Panc1 (cell line): ENCODE measurements at regions of chr17 and their contacts with region 1.

Region 1: DNA sequence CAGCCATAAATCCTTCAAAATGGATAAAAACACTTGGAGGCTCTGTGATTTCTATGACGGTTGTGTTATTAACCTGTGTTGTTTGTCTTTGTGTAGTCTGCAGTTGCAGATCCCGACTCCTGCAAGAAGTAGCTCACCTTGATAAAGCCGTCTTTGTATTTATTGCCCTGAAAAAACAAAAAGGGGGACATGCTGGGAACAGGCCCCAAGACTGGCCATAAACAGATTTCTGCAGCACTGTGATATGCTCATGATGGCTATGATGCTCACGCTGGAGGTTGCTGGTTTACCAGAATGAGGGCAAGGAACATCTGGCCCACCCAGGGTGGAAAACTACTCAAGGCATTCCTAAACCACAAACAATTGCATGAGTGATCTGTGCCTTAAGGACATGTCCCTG is 71.0 kb downstream of the LGALS9 start:
- DNase-seq: no peak
- ATAC-seq: no peak
- H3K4me3 ChIP-seq: no peak overlapping the region
- H3K27ac ChIP-seq: no peak overlapping the region
- H3K4me1 ChIP-seq: no peaks in the 10 kb centered on the region
- H3K27me3 ChIP-seq: no peaks in the 10 kb centered on the region
- CTCF ChIP-seq: no peak

Region 2: DNA sequence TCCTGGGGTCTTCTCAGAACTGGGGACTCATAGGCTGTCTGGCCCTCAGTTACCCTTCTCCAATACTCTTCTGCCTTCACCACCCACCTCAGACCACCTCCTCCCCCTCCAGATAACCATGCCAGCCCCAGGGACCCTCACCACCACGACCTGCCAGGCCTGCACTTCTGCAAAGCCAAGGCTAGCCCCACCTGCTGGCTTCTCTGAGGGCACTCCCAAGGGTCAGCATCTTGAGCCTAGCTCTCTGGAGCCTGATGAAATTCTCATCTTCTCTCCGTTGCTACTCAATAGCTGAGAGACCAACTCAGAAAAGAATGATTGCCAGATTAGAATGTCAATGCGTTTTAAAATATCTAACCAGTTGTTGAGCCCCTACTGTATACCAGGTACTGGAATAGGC is 247.3 kb after region 1 on chr17:
- CTCF ChIA-PET with region 1: no interaction called
- POLR2A ChIA-PET with region 1: interaction called, 11 read pairs
- in situ Hi-C with region 1: no loop called
- intact Hi-C with region 1: no loop called
- DNase-seq: no peak
- ATAC-seq: no peak
- H3K4me3 ChIP-seq: no peak overlapping the region
- H3K27ac ChIP-seq: no peak overlapping the region
- H3K4me1 ChIP-seq: no peaks in the 10 kb centered on the region
- H3K27me3 ChIP-seq: no peaks in the 10 kb centered on the region; the same call in 1 of the 2 replicates
- CTCF ChIP-seq: no peak